Naive thymus-derived CD4-positive, alpha-beta T cell (primary cell): ENCODE measurements at regions of chr11 and their contacts with region 1.

Region 1: GRCh38 chr11:15208378-15209222 is 93.9 kb downstream of the INSC start:
- DNase-seq: peak; percentile 33 to 78 (median 66)
- ATAC-seq: peak; percentile 86
- H3K4me3 ChIP-seq: no peak overlapping the region
- H3K4me3 Mint-ChIP-seq: no peak overlapping the region
- H3K27ac ChIP-seq: no peak overlapping the region
- H3K27ac Mint-ChIP-seq: no peak overlapping the region
- H3K4me1 ChIP-seq: no peaks in the 10 kb centered on the region
- H3K4me1 Mint-ChIP-seq: no peaks in the 10 kb centered on the region
- H3K27me3 ChIP-seq: no peaks in the 10 kb centered on the region
- H3K27me3 Mint-ChIP-seq: peaks cover 0 to 2% (median 0%) of the 10 kb centered on the region in 5 donors

Region 2: GRCh38 chr11:14974515-14975251 is 233.9 kb before region 1 on chr11:
- CTCF ChIA-PET with region 1: no interaction called
- POLR2A ChIA-PET with region 1: no interaction called
- intact Hi-C with region 1: loop called (anchors 2 to 5 kb)
- DNase-seq: peak; percentile 22 to 51 (median 47)
- ATAC-seq: peak; percentile 80
- H3K4me3 ChIP-seq: peak overlapping the region; percentile 47
- H3K4me3 Mint-ChIP-seq: peak overlapping the region; percentile 76 to 92 (median 83)
- H3K27ac ChIP-seq: no peak overlapping the region
- H3K27ac Mint-ChIP-seq: no peak overlapping the region
- H3K4me1 ChIP-seq: peaks cover 11 to 16% of the 10 kb centered on the region in 2 donors
- H3K4me1 Mint-ChIP-seq: peaks cover 20 to 38% (median 32%) of the 10 kb centered on the region in 7 donors
- H3K27me3 ChIP-seq: peaks cover 10 to 25% of the 10 kb centered on the region in 2 donors
- H3K27me3 Mint-ChIP-seq: peaks cover 66 to 89% (median 76%) of the 10 kb centered on the region in 5 donors

Region 3: GRCh38 chr11:15101072-15101709 is 107.4 kb before region 1 on chr11:
- CTCF ChIA-PET with region 1: interaction called, 11 read pairs
- POLR2A ChIA-PET with region 1: no interaction called
- intact Hi-C with region 1: loop called (anchors 1 kb)
- DNase-seq: peak in 6 of 9 donors; percentile 11 to 43 (median 22)
- ATAC-seq: peak; percentile 74
- H3K4me3 ChIP-seq: no peak overlapping the region
- H3K4me3 Mint-ChIP-seq: no peak overlapping the region
- H3K27ac ChIP-seq: no peak overlapping the region
- H3K27ac Mint-ChIP-seq: no peak overlapping the region
- H3K4me1 ChIP-seq: no peaks in the 10 kb centered on the region
- H3K4me1 Mint-ChIP-seq: peaks cover 0 to 3% (median 0%) of the 10 kb centered on the region in 7 donors
- H3K27me3 ChIP-seq: no peaks in the 10 kb centered on the region
- H3K27me3 Mint-ChIP-seq: peaks cover 15 to 38% (median 29%) of the 10 kb centered on the region in 5 donors